ENCODE measurements at regions of chr6 and their contacts with region 1.

Region 1: DNA sequence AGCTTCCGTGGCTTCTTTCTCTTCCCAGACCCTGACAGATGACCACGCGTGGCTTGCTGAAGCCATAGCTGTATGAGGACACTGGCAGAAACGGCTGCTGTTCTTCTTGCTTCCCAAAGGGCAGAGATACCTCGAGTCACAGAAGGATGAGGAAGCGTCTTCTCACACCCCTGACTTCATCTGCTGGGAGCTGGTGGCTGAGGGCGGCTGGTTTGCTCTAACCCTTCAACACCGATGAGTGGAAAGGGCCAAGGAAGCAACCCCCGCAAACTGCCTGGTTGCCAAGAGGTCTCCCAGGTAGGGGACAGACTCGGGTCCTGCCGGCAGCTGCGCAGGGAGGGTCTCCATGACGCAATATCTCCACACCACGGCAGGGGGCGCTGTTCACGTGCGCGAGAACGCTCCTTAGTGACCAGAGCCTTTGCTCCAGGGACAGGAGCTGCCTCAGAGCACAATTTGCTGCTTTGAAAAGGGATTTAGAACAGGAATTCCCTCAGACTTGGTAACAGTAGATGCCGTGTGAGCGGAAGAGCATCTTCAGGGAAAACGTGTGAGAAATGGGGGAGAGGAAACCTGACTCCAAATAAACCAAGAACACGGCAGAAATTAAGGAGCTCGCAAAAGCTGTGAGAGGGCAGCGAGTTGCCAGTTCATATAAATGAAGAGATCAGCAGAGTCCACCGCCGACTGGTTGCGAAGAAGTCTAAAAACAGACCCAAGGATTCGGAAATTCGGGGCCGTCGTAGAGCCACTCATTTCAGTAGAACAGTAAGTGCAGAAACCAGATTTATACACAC is 80.2 kb downstream of the ERMARD start:
- DNase-seq: peak; percentile 88 to 95
- H3K4me3 ChIP-seq: no peak overlapping the region
- H3K27ac ChIP-seq: no peak overlapping the region
- H3K4me1 ChIP-seq: peaks cover 7% of the 10 kb centered on the region
- H3K27me3 ChIP-seq: no peaks in the 10 kb centered on the region
- CTCF ChIP-seq: peak; percentile 86 to 96 (median 93)
- POLR2A ChIP-seq: no peak

Region 2: DNA sequence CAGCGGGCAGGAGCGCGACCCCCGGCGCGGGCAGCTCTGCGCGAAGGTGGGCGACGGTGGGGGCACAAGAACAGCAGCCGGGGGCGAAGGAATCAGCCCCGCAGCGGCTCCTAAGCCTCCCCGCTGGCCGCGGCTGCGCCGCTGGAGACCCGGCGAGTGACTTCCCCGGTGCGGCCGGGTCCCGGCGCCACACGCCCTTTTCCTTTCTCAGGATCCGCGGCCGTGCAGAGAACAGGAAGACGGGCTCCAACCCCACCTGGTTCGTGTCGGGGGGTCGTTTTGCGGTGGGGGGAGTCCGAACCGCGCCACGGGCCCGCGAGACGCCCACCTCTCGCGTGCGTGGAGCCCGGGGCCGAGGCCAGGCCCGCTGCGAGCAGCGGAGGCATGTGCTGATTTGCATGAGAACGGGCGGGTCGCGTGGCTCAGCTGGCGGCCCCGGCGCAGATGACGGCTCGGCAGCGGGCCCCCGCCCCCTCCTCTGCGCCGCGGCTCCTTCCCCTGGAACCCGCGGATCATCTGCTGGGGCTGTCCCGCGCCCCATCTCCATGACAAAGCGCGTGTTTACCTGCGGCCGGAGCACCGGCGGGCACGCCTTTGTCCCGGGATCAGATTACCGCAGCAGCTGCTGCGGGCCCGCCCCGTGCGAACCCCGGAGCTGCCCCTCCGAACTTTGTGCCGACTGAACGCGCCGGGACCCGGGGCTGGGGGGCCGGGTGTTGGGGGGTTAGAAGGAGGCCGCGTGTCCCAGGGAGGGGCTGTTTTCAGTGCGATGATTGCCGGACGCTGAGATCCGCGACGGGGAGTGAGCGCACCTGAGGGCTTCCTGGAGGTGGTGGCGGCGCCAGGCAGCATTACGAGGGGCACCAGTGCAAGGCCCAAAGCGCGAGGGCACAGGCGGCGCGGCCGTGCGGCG is 464.1 kb after region 1 on chr6:
- intact Hi-C with region 1: loop called (anchors 10 kb)
- DNase-seq: no peak
- H3K4me3 ChIP-seq: peak overlapping the region; percentile 46 to 58
- H3K27ac ChIP-seq: no peak overlapping the region
- H3K4me1 ChIP-seq: peaks cover 49% of the 10 kb centered on the region
- H3K27me3 ChIP-seq: peaks cover 7% of the 10 kb centered on the region
- CTCF ChIP-seq: no peak
- POLR2A ChIP-seq: no peak

Region 3: GRCh38 chr6:170516783-170517616 is 685.4 kb after region 1 on chr6:
- intact Hi-C with region 1: loop called (anchors 10 kb)
- DNase-seq: no peak
- H3K4me3 ChIP-seq: no peak overlapping the region
- H3K27ac ChIP-seq: no peak overlapping the region
- H3K4me1 ChIP-seq: no peaks in the 10 kb centered on the region
- H3K27me3 ChIP-seq: no peaks in the 10 kb centered on the region
- CTCF ChIP-seq: peak in 2 of 3 experiments; percentile 27 to 54
- POLR2A ChIP-seq: no peak